Activated T-helper 1 cell treated with anti-CD3 and anti-CD28 coated beads, Interleukin-12 subunit alpha, Interleukin-12 subunit beta, Interleukin-2, Interleukin-4 antibody, amounts not matched to agents 30 ng/mL and 10 ng/mL and 1 ng/mL, durations not matched to agents 14 hours and 24 hours and 36 hours (primary cell): ENCODE measurements at regions of chr14 and their contacts with region 1.

Region 1: DNA sequence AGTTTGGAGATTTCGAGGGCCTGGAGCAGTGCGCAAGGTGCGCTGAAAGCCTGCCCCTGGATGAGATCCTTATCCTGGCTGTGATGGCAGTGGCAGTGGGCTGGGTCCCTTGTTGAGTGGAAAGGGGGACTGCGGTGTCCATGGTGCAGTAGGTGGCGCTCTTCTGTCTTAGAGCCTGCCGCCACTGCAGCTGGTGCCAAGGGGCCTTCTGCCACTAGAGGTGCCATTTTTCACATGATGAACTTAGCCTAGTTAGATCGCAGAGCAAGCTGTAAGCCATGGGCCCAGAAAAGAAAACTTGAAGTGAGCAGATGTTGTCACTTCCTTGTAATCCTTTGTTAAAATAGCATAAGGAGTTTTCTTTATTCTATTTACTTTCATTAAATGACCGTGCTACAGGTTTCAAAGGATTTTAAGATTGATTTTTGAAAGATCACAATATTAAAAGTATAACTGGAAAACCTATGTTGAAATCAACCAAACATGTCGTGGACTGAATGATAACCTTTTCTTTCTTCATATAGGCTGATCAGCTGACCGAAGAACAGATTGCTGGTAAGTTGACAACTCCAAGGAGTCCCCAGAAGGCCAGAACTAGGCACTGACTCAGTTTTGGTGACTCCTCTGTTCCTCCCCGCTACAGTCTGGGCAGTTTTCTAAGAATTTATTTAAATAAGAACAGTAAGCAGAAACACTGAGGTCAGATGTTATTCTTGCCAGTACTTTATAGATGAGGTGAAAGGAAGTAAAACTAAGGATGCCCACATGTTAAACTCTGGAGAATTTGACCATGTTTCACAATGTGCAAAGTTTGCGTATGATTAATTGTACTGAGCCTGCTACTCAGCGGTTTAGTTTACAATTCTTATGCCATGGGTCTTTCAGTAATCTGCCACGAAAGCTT is 3.0 kb downstream of the CALM1 start:
- DNase-seq: peak; percentile 79
- H3K4me3 Mint-ChIP-seq: peak overlapping the region; percentile 96
- H3K27ac Mint-ChIP-seq: peak overlapping the region; percentile 73
- H3K4me1 Mint-ChIP-seq: peaks cover 70% of the 10 kb centered on the region
- H3K27me3 Mint-ChIP-seq: peaks cover 2% of the 10 kb centered on the region

Region 2: DNA sequence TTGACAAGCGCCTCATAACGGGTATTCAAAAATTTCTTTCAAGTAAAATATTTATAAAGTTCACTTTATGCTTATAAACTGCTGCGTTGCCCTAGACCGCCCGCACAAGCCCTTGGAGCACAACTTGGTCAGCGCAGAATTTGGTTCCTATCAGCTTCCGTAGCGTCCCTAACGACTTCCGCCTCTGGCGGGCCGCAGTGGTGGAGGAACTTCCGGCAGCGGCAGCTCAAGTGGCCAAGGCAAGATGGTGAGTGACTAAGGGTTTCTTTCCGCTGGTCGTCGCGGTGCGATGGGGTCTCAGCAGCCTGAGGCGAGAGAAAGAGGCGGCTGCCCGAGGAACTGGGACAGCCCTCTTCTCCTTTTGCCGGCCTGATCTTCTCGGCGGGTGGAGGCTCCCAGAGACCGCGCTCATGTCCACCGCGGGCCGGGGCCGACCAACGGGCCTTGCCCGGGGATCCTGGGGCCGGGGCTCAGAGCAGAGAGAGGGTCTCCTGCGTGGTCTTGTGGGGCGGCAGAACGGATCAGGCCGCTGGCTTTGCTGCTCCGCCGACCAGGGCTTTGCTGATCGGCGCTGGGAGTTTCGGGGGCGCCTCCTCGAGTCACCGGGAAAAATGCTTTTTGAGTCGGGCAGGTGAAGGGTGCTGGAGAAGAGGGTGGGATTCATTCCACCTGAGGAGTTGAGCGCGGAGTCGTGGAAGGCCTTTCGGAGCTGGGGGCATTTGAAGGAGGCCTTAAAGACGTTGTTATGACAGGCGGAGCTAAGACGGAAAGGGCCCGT is 143.2 kb before region 1 on chr14 and contains the start of gene PSMC1:
- intact Hi-C with region 1: loop called (anchors 1 kb)
- DNase-seq: peak; percentile 83
- H3K4me3 Mint-ChIP-seq: peak within 1 kb of the TSS; percentile 99
- H3K27ac Mint-ChIP-seq: peak within 1 kb of the TSS; percentile 93
- H3K4me1 Mint-ChIP-seq: peaks cover 22% of the 10 kb centered on the region
- H3K27me3 Mint-ChIP-seq: peaks cover 6% of the 10 kb centered on the region
- total RNA-seq, gene PSMC1: 171 and 176 TPM in 2 replicates

Region 3: GRCh38 chr14:90368946-90369721 is 30.7 kb before region 1 on chr14:
- intact Hi-C with region 1: loop called (anchors 5 kb)
- DNase-seq: no peak
- H3K4me3 Mint-ChIP-seq: no peak overlapping the region
- H3K27ac Mint-ChIP-seq: no peak overlapping the region
- H3K4me1 Mint-ChIP-seq: no peaks in the 10 kb centered on the region
- H3K27me3 Mint-ChIP-seq: peaks cover 6% of the 10 kb centered on the region

Region 4: GRCh38 chr14:90518941-90519256 is 119.1 kb after region 1 on chr14:
- intact Hi-C with region 1: loop called (anchors 1 kb)
- DNase-seq: peak; percentile 27
- H3K4me3 Mint-ChIP-seq: no peak overlapping the region
- H3K27ac Mint-ChIP-seq: no peak overlapping the region
- H3K4me1 Mint-ChIP-seq: no peaks in the 10 kb centered on the region
- H3K27me3 Mint-ChIP-seq: no peaks in the 10 kb centered on the region

Region 5: DNA sequence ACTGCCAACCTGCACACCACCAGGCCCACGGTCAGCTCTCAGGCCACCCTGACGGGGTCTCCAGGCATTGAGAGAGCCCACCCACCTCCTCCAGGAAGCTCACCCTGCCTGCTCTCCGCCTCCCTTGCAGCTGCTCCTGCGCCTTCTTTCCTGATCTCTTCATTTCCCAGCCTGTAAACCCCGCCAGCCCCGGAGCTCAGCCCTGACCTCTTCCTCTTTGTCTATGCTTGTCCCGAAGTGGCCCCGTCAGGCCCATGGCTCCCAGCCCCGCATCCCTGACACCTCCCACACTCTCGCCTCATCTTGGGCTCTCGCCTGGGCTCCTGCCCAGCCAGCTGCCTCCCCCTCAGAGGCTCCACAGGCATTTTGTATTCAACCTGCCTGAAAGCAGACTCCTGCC is 136.3 kb after region 1 on chr14:
- intact Hi-C with region 1: no loop called
- DNase-seq: no peak
- H3K4me3 Mint-ChIP-seq: no peak overlapping the region
- H3K27ac Mint-ChIP-seq: peak overlapping the region; percentile 29
- H3K4me1 Mint-ChIP-seq: no peaks in the 10 kb centered on the region
- H3K27me3 Mint-ChIP-seq: no peaks in the 10 kb centered on the region

Region 6: DNA sequence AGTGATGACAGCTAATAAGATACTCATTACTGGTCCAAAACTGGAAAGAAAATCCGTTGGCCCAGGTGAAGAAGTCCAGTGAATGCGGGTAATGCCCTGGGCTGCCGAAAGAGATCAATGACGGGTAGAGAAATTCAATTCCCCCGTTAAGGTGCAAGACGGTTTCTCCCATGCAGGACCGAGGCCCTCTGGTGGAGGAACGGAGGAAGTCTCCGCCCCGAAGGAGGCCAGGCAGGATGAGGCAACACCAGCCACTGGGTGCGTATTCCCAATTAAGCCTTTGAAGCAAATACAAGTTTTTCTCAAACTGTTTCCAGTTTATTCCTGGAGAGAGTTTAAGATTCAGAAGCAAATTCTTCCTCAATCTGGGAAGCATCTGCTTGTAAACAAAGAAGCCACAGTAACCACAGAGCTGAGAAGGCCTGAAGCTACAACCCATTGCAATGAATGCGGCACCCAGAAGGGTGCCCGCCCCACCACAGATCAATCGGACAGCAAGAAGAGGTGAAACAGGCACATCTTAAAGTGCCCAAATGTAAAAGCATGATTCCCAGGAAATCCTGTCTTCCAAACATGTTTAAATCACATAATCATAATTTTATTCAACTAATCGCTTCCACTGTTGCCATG is 297.9 kb after region 1 on chr14:
- intact Hi-C with region 1: loop called (anchors 1 kb)
- DNase-seq: peak; percentile 59
- H3K4me3 Mint-ChIP-seq: no peak overlapping the region
- H3K27ac Mint-ChIP-seq: no peak overlapping the region
- H3K4me1 Mint-ChIP-seq: no peaks in the 10 kb centered on the region
- H3K27me3 Mint-ChIP-seq: peaks cover 3% of the 10 kb centered on the region

Region 7: DNA sequence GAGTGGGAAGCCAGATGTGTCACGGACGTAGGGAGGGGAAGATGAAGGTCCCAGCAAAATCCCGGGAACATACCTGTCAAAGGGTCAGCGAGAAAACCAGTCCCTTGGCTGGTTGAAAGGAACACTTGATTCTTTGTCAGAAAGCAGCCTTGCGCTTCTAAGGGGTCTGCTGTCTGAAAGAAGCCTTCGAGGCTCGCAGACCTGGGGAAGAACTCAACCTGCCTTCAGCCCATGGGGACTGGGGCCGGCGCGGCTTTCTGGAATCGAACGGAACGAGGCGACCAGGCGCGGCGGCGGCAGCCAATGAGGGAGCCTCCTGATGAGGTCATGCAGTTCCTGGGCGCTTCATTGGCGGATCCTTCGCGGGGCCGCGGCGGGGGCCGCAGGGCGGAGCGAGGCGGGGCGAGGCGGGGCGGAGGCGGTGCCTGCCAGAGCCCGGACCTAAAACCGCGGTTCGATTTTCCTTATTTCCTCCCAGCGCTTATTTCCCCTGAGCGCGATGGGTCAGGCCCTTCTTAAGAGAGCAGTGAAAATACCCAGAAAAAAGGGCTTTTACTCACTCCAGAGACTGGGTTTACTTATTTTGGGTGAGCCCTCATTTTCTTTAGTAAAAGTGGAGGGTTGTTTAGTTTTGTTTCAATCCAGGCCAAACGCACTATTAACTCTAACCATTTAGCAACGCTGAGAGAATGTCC is 428.3 kb after region 1 on chr14:
- intact Hi-C with region 1: loop called (anchors 1 kb)
- DNase-seq: peak; percentile 91
- H3K4me3 Mint-ChIP-seq: peak overlapping the region; percentile 76
- H3K27ac Mint-ChIP-seq: peak overlapping the region; percentile 88
- H3K4me1 Mint-ChIP-seq: peaks cover 28% of the 10 kb centered on the region
- H3K27me3 Mint-ChIP-seq: peaks cover 5% of the 10 kb centered on the region